HCT116 (cell line): ENCODE measurements at regions of chr14 and their contacts with region 1.

Region 1: GRCh38 chr14:89040460-89041259 is 216.2 kb downstream of the TTC8 start:
- DNase-seq: peak; percentile 73
- ATAC-seq: peak; percentile 89
- H3K4me3 ChIP-seq: peak overlapping the region; percentile 37 to 56
- H3K27ac ChIP-seq: peak overlapping the region; percentile 82
- H3K4me1 ChIP-seq: peaks cover 13 to 30% of the 10 kb centered on the region in 2 experiments
- H3K27me3 ChIP-seq: no peaks in the 10 kb centered on the region
- CTCF ChIP-seq: peak; percentile 83 to 97 (median 91)
- POLR2A ChIP-seq: no peak
- RAD21 ChIP-seq: peak; percentile 95

Region 2: DNA sequence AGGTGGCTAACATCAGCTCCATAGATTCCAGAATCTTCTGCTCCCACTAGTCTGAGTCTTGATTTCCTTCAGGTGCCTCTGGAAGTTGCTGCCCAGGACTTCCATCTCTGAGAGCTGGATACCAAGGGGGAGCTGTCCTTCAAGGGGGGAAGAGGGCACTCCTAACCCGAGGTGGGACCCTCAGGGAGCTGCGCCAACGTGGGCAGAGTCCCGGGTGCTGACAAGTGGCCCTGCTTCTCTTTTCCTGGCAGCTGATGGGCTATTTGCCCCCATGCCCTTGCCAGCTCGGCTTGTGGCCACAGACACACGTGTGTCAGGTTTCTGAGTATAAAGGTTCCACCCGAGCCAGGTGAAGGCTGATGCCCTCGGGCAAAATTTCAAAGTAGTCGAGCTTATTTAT is 56.3 kb after region 1 on chr14:
- CTCF ChIA-PET with region 1: no interaction called
- POLR2A ChIA-PET with region 1: no interaction called
- RAD21 ChIA-PET with region 1: no interaction called
- intact Hi-C with region 1: no loop called
- DNase-seq: no peak
- ATAC-seq: no peak
- H3K4me3 ChIP-seq: no peak overlapping the region
- H3K27ac ChIP-seq: no peak overlapping the region
- H3K4me1 ChIP-seq: no peaks in the 10 kb centered on the region
- H3K27me3 ChIP-seq: no peaks in the 10 kb centered on the region
- CTCF ChIP-seq: no peak
- POLR2A ChIP-seq: no peak
- RAD21 ChIP-seq: no peak

Region 3: GRCh38 chr14:89137514-89138163 is 97.0 kb after region 1 on chr14:
- CTCF ChIA-PET with region 1: no interaction called
- POLR2A ChIA-PET with region 1: no interaction called
- RAD21 ChIA-PET with region 1: no interaction called
- intact Hi-C with region 1: loop called (anchors 2 kb)
- DNase-seq: peak; percentile 70
- ATAC-seq: peak; percentile 99
- H3K4me3 ChIP-seq: 0 out of 4 replicates have a peak overlapping the region, but pooled peaks of 1 of the 2 experiments have one; percentile 22
- H3K27ac ChIP-seq: no peak overlapping the region
- H3K4me1 ChIP-seq: peaks cover 18 to 28% of the 10 kb centered on the region in 2 experiments; a peak in 3 of 4 replicates
- H3K27me3 ChIP-seq: peaks cover 4% of the 10 kb centered on the region; the same call in 1 of the 2 replicates
- CTCF ChIP-seq: no peak
- POLR2A ChIP-seq: no peak
- RAD21 ChIP-seq: no peak; the same call in 1 of the 2 replicates

Region 4: GRCh38 chr14:89237921-89238529 is 197.4 kb after region 1 on chr14:
- CTCF ChIA-PET with region 1: interaction called, 5 read pairs
- POLR2A ChIA-PET with region 1: no interaction called
- RAD21 ChIA-PET with region 1: no interaction called
- intact Hi-C with region 1: loop called (anchors 5 kb)
- DNase-seq: no peak
- ATAC-seq: peak; percentile 73
- H3K4me3 ChIP-seq: no peak overlapping the region
- H3K27ac ChIP-seq: no peak overlapping the region
- H3K4me1 ChIP-seq: no peaks in the 10 kb centered on the region
- H3K27me3 ChIP-seq: no peaks in the 10 kb centered on the region
- CTCF ChIP-seq: peak; percentile 23 to 46 (median 41); a peak in 4 of 6 replicates
- POLR2A ChIP-seq: no peak
- RAD21 ChIP-seq: peak; percentile 52

Region 5: DNA sequence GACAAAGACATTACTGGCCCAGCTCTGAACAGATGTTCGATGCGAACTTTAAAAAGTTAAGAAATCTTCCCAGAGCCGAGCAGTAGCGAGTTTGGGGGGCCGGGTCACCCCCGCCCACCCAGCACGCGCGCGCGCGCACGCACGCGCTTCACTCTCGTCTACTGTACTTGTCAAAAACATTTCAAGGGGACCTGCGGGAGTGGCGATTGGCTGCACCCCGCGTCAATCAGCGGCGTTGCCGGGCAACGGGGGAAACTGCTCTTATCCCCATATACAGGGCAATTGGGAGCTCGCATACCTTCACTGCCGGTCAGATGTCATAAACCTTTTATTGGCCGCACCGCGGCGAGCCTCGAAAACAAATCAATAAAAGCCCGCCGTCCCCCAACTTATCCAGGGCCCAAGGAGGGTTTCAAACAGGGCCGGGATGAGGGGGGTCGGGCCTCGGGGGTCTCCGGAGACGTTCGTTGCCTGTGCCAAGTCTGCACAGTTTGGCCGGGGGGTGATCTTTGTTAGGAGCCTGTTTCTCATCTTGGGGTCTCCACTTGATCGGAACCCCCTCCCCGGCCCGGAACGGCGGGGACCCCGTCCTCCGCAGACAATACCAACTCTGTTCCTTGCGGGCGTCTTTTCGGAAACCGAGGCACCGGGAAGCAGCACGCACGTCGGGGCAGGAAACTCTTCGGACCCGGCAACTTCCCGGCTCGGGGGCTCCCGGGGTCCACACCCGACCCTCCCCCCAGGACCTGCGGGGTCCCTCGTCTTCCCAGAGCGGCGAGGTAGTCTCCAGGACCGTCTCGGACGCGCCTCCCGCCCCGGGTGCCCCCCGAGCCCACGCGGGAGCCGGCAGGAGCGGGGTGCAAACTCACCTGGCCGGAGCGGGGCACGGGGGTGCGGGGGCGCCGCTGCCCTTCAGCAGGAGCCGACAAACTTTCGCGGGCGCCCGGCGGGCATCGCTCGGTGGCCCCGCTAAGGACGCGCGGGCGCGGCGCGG is 375.6 kb after region 1 on chr14:
- CTCF ChIA-PET with region 1: no interaction called
- POLR2A ChIA-PET with region 1: no interaction called
- RAD21 ChIA-PET with region 1: interaction called in 1 of 2 experiments, 3 read pairs
- intact Hi-C with region 1: loop called (anchors 2 kb)
- DNase-seq: peak; percentile 94
- ATAC-seq: peak; percentile 77
- H3K4me3 ChIP-seq: peak overlapping the region; percentile 78 to 82
- H3K27ac ChIP-seq: peak overlapping the region; percentile 72; the same call in 1 of the 2 replicates
- H3K4me1 ChIP-seq: peaks cover 4 to 22% of the 10 kb centered on the region in 2 experiments; a peak in 3 of 4 replicates
- H3K27me3 ChIP-seq: no peaks in the 10 kb centered on the region
- CTCF ChIP-seq: no peak
- POLR2A ChIP-seq: no peak
- RAD21 ChIP-seq: no peak

Region 6: GRCh38 chr14:89429192-89430181 is 388.8 kb after region 1 on chr14:
- CTCF ChIA-PET with region 1: no interaction called
- POLR2A ChIA-PET with region 1: no interaction called
- RAD21 ChIA-PET with region 1: no interaction called
- intact Hi-C with region 1: no loop called
- DNase-seq: no peak
- ATAC-seq: no peak
- H3K4me3 ChIP-seq: no peak overlapping the region
- H3K27ac ChIP-seq: no peak overlapping the region
- H3K4me1 ChIP-seq: peaks cover 19 to 33% of the 10 kb centered on the region in 2 experiments
- H3K27me3 ChIP-seq: no peaks in the 10 kb centered on the region
- CTCF ChIP-seq: no peak
- POLR2A ChIP-seq: no peak
- RAD21 ChIP-seq: no peak

Region 7: DNA sequence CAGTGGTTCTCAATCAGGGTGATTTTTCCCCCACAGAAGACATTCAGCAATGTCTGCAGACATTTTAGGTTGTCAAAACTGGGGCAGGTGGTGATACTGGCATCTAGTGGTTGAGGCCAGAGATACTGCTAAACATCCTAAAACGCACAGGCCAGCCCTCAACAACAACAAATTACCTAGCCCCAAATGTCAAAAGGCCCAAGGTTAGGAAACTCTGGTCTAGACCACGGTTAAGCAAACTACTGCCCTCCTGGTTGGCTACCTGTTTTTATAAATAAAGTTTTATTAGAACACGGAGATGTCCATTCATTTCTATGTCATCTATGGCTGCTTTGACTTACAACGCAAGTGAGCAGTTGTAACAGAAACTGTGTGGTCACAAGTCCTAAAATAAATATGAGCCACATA is 727.2 kb after region 1 on chr14:
- CTCF ChIA-PET with region 1: interaction called, 5 read pairs
- POLR2A ChIA-PET with region 1: no interaction called
- RAD21 ChIA-PET with region 1: no interaction called
- intact Hi-C with region 1: loop called (anchors 1 kb)
- DNase-seq: peak; percentile 43
- ATAC-seq: peak; percentile 92
- H3K4me3 ChIP-seq: no peak overlapping the region
- H3K27ac ChIP-seq: no peak overlapping the region
- H3K4me1 ChIP-seq: no peaks in the 10 kb centered on the region
- H3K27me3 ChIP-seq: peaks cover 9% of the 10 kb centered on the region; the same call in 1 of the 2 replicates
- CTCF ChIP-seq: peak; percentile 57 to 82 (median 75); a peak in 5 of 6 replicates
- POLR2A ChIP-seq: no peak
- RAD21 ChIP-seq: peak; percentile 87

Region 8: GRCh38 chr14:89899917-89900663 is 859.4 kb after region 1 on chr14:
- CTCF ChIA-PET with region 1: interaction called, 4 read pairs
- POLR2A ChIA-PET with region 1: no interaction called
- RAD21 ChIA-PET with region 1: no interaction called
- intact Hi-C with region 1: loop called (anchors 1 kb)
- DNase-seq: peak; percentile 13
- ATAC-seq: peak; percentile 85
- H3K4me3 ChIP-seq: no peak overlapping the region
- H3K27ac ChIP-seq: no peak overlapping the region
- H3K4me1 ChIP-seq: no peaks in the 10 kb centered on the region
- H3K27me3 ChIP-seq: no peaks in the 10 kb centered on the region
- CTCF ChIP-seq: peak; percentile 40 to 73 (median 56); a peak in 4 of 6 replicates
- POLR2A ChIP-seq: no peak
- RAD21 ChIP-seq: peak; percentile 61

Region 9: DNA sequence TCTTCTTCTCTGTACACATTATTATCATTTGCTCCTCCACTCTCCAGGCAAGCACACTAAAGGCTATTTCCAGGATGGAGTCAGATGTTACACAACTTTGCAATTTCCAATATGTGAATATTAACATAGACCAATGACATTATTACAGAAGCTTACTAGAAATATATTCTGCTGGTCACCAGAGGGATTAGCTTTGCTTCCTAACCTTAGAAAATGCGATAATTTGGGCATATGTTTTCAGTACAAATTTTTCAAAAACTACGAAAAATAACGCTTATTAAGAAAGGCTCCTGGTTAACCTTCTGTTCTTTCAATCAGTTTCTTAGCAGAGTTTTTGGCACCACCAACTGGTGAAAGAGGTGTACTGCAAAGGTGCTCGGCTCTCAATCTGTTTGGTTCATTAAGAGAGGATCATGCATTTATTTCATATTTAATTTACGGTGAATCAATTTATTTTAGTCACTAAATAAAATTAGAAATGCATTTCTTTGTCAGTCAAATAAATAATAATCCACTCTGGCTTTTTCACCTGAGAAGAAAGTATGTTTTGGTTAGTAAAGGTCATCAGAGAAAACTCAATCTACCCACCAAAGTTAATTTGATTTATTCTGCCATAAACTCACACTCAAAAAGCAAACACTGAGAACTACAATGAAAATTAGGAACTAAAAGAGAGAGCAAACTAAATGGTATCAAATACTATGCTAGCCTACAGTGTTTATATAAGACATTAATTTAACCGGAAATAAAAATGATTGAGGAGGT is 874.6 kb after region 1 on chr14:
- CTCF ChIA-PET with region 1: interaction called, 3 read pairs
- POLR2A ChIA-PET with region 1: no interaction called
- RAD21 ChIA-PET with region 1: no interaction called
- intact Hi-C with region 1: loop called (anchors 2 kb)
- DNase-seq: peak; percentile 57
- ATAC-seq: peak; percentile 68; the same call in 1 of the 2 replicates
- H3K4me3 ChIP-seq: no peak overlapping the region
- H3K27ac ChIP-seq: no peak overlapping the region
- H3K4me1 ChIP-seq: no peaks in the 10 kb centered on the region
- H3K27me3 ChIP-seq: no peaks in the 10 kb centered on the region
- CTCF ChIP-seq: peak; percentile 65 to 95 (median 90); a peak in 5 of 6 replicates
- POLR2A ChIP-seq: no peak
- RAD21 ChIP-seq: peak; percentile 82